ENCODE measurements at regions of chr4 and their contacts with region 1.

Region 1: DNA sequence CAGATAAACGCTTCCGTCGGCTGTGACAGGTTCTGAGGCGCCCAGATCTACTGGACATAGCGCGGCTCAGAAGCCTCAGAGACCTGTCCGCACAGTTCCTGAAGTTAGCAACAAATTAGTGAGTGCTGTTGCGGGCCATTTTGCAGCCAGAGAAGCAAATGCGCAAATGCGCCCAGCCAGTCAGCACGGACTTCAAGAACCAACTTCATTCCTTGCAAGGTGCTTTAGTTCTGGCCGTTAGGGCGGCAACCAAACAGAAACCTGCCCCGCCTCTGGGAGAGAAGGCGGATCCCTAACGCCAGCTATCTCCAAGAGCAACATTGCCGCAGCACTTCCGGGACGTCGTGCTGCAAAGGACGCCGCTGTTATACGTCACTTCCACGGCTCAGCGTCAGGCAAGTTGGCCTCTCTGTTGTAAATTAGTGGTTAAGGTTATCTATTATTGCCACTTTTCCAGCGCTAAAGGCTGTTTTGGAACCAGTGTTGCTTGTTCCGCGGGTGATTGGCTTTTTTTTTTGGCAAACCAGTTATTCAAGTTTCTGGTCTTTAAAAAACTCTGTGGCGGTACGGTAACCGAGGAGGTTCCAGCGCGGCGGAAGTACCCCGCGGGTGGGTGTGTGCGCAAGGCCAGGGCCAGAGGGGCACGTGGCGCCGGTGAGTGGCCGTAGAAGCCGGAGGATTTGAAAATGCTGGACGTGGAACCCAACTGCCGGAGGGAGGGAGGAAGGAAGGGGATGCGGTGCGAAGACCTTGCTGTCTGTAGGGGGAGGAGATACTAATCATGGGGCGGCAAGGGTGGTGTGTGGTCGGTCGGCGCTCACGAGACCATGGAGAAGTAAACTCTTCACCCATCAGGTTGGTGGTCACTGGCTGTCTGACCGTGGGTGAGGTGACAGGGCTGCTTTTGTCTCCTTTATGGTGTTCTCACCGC is at the start of gene GAR1:
- DNase-seq: peak; percentile 94
- ATAC-seq: peak; percentile 95
- H3K4me3 Mint-ChIP-seq: peak within 1 kb of the TSS; percentile 95
- H3K27ac Mint-ChIP-seq: peak within 1 kb of the TSS; percentile 98
- H3K4me1 Mint-ChIP-seq: peaks cover 44% of the 10 kb centered on the region
- H3K27me3 Mint-ChIP-seq: no peaks in the 10 kb centered on the region
- CTCF ChIP-seq: no peak
- total RNA-seq, gene GAR1: 36.4 to 42.1 TPM

Region 2: GRCh38 chr4:109424093-109424841 is 391.1 kb before region 1 on chr4:
- CTCF ChIA-PET with region 1: interaction called, 3 read pairs
- POLR2A ChIA-PET with region 1: no interaction called
- intact Hi-C with region 1: loop called (anchors 5 kb)
- DNase-seq: no peak
- ATAC-seq: no peak
- H3K4me3 Mint-ChIP-seq: no peak overlapping the region
- H3K27ac Mint-ChIP-seq: no peak overlapping the region
- H3K4me1 Mint-ChIP-seq: peaks cover 5% of the 10 kb centered on the region
- H3K27me3 Mint-ChIP-seq: no peaks in the 10 kb centered on the region
- CTCF ChIP-seq: no peak

Region 3: GRCh38 chr4:109648266-109648996 is 167.0 kb before region 1 on chr4:
- CTCF ChIA-PET with region 1: no interaction called
- POLR2A ChIA-PET with region 1: no interaction called
- intact Hi-C with region 1: no loop called
- DNase-seq: no peak
- ATAC-seq: peak; percentile 60
- H3K4me3 Mint-ChIP-seq: peak overlapping the region; percentile 47
- H3K27ac Mint-ChIP-seq: peak overlapping the region; percentile 89
- H3K4me1 Mint-ChIP-seq: peaks cover 37% of the 10 kb centered on the region
- H3K27me3 Mint-ChIP-seq: no peaks in the 10 kb centered on the region
- CTCF ChIP-seq: no peak

Region 4: GRCh38 chr4:109826719-109827118 is 11.3 kb after region 1 on chr4:
- CTCF ChIA-PET with region 1: interaction called, 17 read pairs
- POLR2A ChIA-PET with region 1: interaction called, 4 read pairs
- intact Hi-C with region 1: no loop called
- DNase-seq: no peak
- ATAC-seq: no peak
- H3K4me3 Mint-ChIP-seq: no peak overlapping the region
- H3K27ac Mint-ChIP-seq: no peak overlapping the region
- H3K4me1 Mint-ChIP-seq: peaks cover 6% of the 10 kb centered on the region
- H3K27me3 Mint-ChIP-seq: no peaks in the 10 kb centered on the region
- CTCF ChIP-seq: peak; percentile 50